BJ (cell line): ENCODE measurements at regions of chr20 and their contacts with region 1.

Region 1: GRCh38 chr20:17898548-17898994 is 70.0 kb downstream of the SNX5 start:
- DNase-seq: no peak
- H3K4me3 ChIP-seq: no peak overlapping the region
- H3K27me3 ChIP-seq: no peaks in the 10 kb centered on the region
- CTCF ChIP-seq: peak; percentile 93

Region 2: GRCh38 chr20:17648791-17649730 is 249.5 kb before region 1 on chr20:
- CTCF ChIA-PET with region 1: interaction called, 10 read pairs
- POLR2A ChIA-PET with region 1: no interaction called
- DNase-seq: no peak
- H3K4me3 ChIP-seq: no peak overlapping the region
- H3K27me3 ChIP-seq: no peaks in the 10 kb centered on the region
- CTCF ChIP-seq: peak; percentile 41

Region 3: GRCh38 chr20:17676942-17677341 is 221.6 kb before region 1 on chr20:
- CTCF ChIA-PET with region 1: interaction called, 21 read pairs
- POLR2A ChIA-PET with region 1: interaction called, 16 read pairs
- DNase-seq: no peak
- H3K4me3 ChIP-seq: no peak overlapping the region
- H3K27me3 ChIP-seq: no peaks in the 10 kb centered on the region
- CTCF ChIP-seq: no peak

Region 4: DNA sequence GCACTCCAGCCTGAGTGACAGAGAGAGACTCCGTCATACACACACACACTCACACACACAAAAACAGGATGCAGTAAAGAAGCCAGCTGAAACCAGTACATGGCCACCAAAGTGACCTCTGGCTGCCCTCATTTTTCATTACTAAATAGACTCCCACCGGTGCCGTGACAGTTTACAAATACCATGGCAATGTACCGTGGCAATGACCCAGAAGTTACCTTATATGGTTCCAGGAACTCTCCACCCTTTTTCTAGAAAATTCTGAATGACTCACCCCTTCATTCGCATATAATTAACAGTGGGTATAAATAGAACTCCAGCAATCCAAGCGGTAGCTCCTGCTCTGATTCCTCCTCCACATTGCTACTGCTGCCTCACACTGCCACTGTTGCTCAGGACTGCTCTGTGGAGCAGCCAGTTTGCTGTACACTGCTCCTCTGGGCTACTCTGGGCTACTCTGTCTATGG is 12.3 kb after region 1 on chr20:
- CTCF ChIA-PET with region 1: interaction called, 20 read pairs
- POLR2A ChIA-PET with region 1: no interaction called
- DNase-seq: peak; percentile 89
- H3K4me3 ChIP-seq: no peak overlapping the region
- H3K27me3 ChIP-seq: no peaks in the 10 kb centered on the region; the same call in 1 of the 2 replicates
- CTCF ChIP-seq: no peak

Region 5: DNA sequence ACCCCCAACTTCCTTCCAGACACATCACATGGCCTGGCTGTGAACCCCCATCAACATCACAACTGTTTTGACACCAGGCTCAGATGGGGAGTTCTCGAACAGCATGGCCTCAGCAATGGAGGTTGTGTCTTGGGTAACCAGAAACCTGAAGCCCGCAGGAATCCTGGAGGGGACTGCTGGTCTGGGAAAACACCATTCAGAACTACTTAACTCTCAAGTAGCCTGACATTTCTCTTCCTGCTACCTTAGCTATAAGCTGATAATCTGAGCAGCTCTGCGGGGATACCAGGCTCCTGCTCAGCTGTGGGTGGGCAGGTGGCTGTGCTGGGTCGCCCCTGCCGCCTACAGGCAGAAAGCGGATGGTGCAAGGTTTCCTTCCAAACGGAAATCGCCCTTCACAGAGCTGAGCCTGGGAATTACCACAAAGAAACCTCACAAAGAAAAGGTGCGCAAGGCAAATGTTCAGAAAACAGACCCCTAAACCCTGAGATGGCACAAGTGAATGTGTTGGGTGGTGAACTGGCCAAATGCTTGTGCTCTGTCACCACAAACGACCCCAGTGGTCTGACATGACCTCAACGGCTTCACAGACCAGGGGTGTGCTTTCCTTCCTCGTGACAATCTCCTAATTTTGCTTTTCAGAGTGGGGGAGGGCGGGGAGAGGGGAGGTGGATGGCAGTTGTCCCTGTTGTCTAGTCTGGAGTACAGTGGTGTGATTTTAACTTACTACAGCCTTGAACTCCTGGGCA is 40.5 kb after region 1 on chr20:
- CTCF ChIA-PET with region 1: interaction called, 12 read pairs
- POLR2A ChIA-PET with region 1: no interaction called
- DNase-seq: no peak
- H3K4me3 ChIP-seq: no peak overlapping the region
- H3K27me3 ChIP-seq: no peaks in the 10 kb centered on the region
- CTCF ChIP-seq: peak; percentile 97

Region 6: GRCh38 chr20:18331694-18332093 is 433.1 kb after region 1 on chr20:
- CTCF ChIA-PET with region 1: no interaction called
- POLR2A ChIA-PET with region 1: no interaction called
- DNase-seq: no peak
- H3K4me3 ChIP-seq: no peak overlapping the region
- H3K27me3 ChIP-seq: no peaks in the 10 kb centered on the region
- CTCF ChIP-seq: no peak

Region 7: DNA sequence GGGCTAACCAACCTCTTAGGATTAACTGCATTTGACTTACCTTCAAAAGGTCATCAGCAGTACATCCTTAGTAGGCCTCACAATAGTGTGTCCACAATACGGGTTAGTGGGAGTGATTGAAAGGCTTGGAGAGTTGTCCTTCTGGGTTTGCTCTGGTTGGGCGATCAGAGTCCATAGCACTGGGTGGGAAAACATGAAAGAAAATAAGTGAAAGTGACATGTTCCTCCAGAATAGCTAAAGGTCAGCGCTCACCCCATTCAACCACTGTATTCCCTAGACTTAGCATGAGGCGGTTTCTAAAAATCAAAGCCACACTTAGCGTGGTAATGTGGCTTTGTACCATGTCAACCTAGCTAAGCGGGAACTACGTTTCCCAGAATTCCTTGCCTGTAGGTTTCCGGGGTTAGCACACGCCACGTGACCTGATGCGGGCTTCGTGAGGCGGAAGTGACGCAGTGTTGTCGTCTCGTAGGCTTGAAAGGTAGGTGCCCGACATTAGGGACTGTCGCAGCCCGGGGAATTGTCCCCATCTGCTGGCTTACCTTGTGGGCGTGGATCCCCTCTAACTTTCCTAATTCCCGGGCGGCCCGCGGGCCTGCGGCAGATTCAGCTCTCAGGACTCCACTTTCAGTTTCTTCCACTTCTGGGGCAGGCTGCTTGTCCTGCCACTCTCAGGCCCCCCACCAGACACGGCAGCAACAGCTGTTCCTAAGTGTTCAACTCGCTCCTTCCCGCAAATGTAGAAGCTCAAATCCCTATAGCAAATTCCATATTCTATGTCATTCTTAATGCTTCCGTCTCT is 895.3 kb after region 1 on chr20:
- CTCF ChIA-PET with region 1: no interaction called
- POLR2A ChIA-PET with region 1: no interaction called
- DNase-seq: peak; percentile 55
- H3K4me3 ChIP-seq: peak overlapping the region; percentile 67
- H3K27me3 ChIP-seq: peaks cover 2% of the 10 kb centered on the region
- CTCF ChIP-seq: no peak